Activated CD4-positive, alpha-beta T cell treated with anti-CD3 and anti-CD28 coated beads for 36 hours (primary cell): ENCODE measurements at regions of chr12 and their contacts with region 1.

Region 1: DNA sequence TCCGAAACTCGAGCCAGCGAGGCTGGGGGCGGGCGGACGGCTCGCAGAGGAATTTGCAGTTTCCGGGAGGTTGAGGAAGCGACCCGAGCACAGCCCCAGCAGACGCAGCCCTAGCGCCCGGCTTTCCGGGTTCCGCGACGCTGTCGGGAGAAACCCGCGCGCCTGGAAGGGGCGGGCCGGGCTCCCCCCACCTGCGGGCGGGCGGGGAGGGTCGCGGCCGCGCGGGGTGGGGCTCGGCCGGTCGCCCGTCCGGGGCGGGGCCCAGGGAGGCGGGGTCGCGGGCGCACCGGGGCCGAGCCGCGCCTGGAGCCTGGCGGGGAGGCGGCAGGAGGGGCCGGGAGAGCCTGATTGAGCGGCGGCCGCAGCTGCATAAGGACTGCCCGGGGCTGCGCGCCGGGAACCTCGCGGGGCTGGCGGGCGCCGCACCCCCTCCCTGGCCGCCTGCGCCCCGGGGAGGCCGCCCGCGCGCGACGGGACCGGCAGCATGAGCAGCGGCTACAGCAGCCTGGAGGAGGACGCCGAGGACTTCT is at the start of gene RASSF3:
- DNase-seq: peak; percentile 85
- ATAC-seq: peak; percentile 63
- H3K4me3 Mint-ChIP-seq: peak within 1 kb of the TSS; percentile 80
- H3K27ac Mint-ChIP-seq: peak within 1 kb of the TSS; percentile 92
- H3K4me1 Mint-ChIP-seq: peaks cover 36% of the 10 kb centered on the region
- H3K27me3 Mint-ChIP-seq: no peaks in the 10 kb centered on the region
- total RNA-seq, gene RASSF3: 38.0 to 39.0 TPM

Region 2: GRCh38 chr12:64451687-64452558 is 158.3 kb before region 1 on chr12 and contains the start of gene TBK1:
- CTCF ChIA-PET with region 1: no interaction called
- POLR2A ChIA-PET with region 1: no interaction called
- intact Hi-C with region 1: loop called (anchors 2 to 5 kb)
- DNase-seq: peak; percentile 75
- ATAC-seq: peak; percentile 64
- H3K4me3 Mint-ChIP-seq: peak within 1 kb of the TSS; percentile 89
- H3K27ac Mint-ChIP-seq: peak within 1 kb of the TSS; percentile 98
- H3K4me1 Mint-ChIP-seq: peaks cover 40% of the 10 kb centered on the region
- H3K27me3 Mint-ChIP-seq: no peaks in the 10 kb centered on the region
- total RNA-seq, gene TBK1: 14.0 to 15.4 TPM

Region 3: DNA sequence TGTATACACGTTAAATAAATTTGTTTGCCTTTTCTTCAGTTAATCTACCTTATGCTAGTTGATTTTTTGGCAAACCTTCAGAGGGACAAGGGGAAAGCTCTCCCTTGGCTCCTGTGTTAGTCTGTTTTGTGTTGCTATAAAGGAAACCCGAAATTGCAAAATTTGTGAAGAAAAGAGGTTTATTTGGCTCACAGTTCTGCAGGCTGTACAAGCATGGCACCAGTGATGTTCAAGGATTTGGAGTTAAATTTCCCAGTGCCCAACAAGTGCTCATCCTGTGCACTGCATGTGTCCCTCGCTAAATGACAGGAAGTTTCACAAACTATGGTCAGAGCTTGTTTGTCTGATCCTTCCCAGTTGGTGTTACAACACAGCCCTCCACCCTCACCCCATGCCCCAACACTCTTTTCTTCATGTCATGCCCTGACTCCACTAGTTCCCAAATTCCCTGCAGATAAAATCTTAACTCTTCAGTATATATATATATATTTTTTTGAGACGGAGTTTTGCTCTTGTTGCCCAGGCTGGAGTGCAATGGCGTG is 13.9 kb before region 1 on chr12:
- CTCF ChIA-PET with region 1: interaction called, 10 read pairs
- POLR2A ChIA-PET with region 1: interaction called, 3 read pairs
- intact Hi-C with region 1: loop called in 1 of 2 experiments (anchors 1 kb)
- DNase-seq: no peak
- ATAC-seq: no peak
- H3K4me3 Mint-ChIP-seq: no peak overlapping the region
- H3K27ac Mint-ChIP-seq: no peak overlapping the region
- H3K4me1 Mint-ChIP-seq: peaks cover 39% of the 10 kb centered on the region
- H3K27me3 Mint-ChIP-seq: no peaks in the 10 kb centered on the region

Region 4: DNA sequence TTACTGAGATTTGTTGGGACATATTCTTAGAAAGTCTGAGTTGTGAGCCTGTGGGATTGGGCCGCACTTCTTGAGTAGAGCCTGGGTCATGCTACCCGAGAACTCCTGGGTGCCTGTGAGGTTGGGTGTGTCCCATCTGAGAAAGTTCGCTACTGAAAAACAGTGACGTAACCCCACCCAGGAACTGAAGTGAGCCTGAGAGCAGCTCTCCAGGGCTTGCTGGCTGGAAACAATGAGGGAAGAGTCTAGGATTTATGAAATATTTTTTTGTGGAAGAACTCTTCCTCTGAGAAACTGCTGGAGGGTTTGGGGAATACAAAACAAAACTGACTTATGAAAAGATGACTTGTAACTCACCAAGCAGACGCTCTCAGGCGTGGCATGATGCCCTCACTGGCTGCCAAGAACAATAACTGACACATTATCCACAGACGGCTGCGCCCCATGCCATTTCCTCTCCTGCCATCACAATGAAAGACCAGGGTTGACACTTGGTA is 69.3 kb after region 1 on chr12:
- CTCF ChIA-PET with region 1: interaction called, 5 read pairs
- POLR2A ChIA-PET with region 1: interaction called, 3 read pairs
- intact Hi-C with region 1: loop called in 1 of 2 experiments (anchors 1 kb)
- DNase-seq: peak; percentile 79
- ATAC-seq: peak; percentile 59
- H3K4me3 Mint-ChIP-seq: peak overlapping the region; percentile 53
- H3K27ac Mint-ChIP-seq: peak overlapping the region; percentile 91
- H3K4me1 Mint-ChIP-seq: peaks cover 96% of the 10 kb centered on the region
- H3K27me3 Mint-ChIP-seq: no peaks in the 10 kb centered on the region

Region 5: DNA sequence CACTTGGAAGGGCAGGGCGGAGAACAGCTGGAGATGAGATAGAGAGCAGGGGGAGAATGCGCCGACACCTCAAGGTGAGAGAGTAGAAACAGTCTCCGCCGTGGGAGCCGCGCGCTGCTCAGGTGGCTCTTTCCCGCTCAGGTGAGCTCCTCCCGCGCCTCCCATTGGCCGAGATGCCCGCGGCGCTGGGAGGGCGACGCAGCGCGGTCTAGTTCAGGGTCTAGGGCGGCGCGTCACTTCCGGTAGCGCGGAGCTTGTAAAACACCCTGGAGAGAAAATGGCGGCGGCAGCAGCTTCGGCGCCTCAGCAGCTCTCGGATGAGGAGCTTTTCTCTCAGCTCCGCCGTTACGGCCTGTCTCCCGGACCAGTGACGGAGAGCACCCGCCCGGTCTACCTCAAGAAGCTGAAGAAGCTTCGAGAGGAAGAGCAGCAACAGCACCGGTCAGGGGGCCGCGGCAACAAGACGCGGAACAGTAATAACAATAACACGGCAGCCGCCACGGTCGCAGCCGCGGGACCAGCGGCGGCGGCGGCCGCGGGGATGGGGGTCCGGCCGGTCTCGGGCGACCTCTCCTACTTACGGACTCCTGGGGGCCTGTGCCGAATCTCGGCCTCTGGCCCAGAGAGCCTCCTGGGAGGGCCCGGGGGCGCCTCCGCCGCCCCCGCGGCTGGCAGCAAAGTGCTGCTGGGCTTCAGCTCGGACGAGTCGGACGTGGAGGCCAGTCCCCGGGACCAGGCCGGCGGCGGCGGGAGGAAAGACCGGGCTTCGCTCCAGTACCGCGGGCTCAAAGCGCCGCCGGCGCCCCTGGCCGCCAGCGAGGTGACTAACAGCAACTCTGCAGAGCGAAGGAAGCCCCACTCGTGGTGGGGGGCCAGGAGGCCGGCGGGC is 559.4 kb after region 1 on chr12 and contains the start of gene LEMD3:
- CTCF ChIA-PET with region 1: no interaction called
- POLR2A ChIA-PET with region 1: no interaction called
- intact Hi-C with region 1: loop called in 1 of 2 experiments (anchors 5 kb)
- DNase-seq: peak; percentile 97
- ATAC-seq: peak; percentile 94
- H3K4me3 Mint-ChIP-seq: peak within 1 kb of the TSS; percentile 92
- H3K27ac Mint-ChIP-seq: peak within 1 kb of the TSS; percentile 97
- H3K4me1 Mint-ChIP-seq: peaks cover 30% of the 10 kb centered on the region
- H3K27me3 Mint-ChIP-seq: peaks cover 3% of the 10 kb centered on the region
- total RNA-seq, gene LEMD3: 15.9 to 17.6 TPM